ENCODE measurements at regions of chr2 and their contacts with region 1.

Region 1: GRCh38 chr2:28594289-28595108 is 98.6 kb downstream of the PLB1 start:
- DNase-seq: peak; percentile 73
- H3K4me3 Mint-ChIP-seq: peak overlapping the region; percentile 11
- H3K27ac Mint-ChIP-seq: peak overlapping the region; percentile 79
- H3K4me1 Mint-ChIP-seq: peaks cover 18% of the 10 kb centered on the region
- H3K27me3 Mint-ChIP-seq: no peaks in the 10 kb centered on the region

Region 2: DNA sequence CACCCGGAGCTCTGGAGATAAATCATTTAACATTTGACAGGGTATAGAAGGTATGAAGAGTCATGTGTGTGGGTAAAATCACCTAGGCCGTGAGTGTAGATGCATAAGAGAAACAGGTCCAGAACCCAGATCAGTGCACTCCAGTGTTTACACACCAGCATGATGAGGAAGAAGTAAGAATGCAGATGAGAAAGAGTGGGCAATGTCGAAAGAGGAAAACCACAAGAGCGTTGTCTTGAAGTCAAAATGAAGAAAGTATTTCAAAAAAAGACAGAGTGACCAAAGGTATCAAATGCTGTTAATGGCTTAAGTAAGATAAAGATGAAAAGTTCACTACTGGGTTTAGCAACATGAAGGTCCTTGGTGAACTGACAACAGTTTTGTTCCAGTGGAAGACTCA is 130.6 kb before region 1 on chr2:
- intact Hi-C with region 1: no loop called
- DNase-seq: no peak
- H3K4me3 Mint-ChIP-seq: no peak overlapping the region
- H3K27ac Mint-ChIP-seq: peak overlapping the region; percentile 38
- H3K4me1 Mint-ChIP-seq: peaks cover 42% of the 10 kb centered on the region
- H3K27me3 Mint-ChIP-seq: peaks cover 2% of the 10 kb centered on the region

Region 3: DNA sequence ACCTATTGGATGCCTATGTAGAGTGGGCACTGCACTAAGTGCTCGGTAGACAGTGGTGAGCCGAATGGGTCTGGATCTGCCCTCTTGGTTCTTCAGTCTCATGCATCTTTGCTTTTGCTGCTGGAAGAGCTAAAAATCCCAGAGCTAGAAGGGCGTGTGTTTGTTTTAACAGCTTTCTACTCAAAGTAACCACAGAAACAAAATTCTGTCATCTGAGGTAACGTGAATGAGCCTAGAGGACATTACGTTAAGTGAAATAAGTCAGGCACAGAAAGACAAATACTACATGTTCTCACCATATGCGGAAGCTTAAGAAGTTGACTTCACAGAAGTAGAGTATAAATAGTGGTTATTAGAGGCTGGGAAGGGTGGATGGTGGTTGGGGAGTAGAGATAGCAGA is 21.2 kb after region 1 on chr2:
- intact Hi-C with region 1: loop called (anchors 1 kb)
- DNase-seq: no peak
- H3K4me3 Mint-ChIP-seq: no peak overlapping the region
- H3K27ac Mint-ChIP-seq: no peak overlapping the region
- H3K4me1 Mint-ChIP-seq: peaks cover 48% of the 10 kb centered on the region
- H3K27me3 Mint-ChIP-seq: no peaks in the 10 kb centered on the region

Region 4: DNA sequence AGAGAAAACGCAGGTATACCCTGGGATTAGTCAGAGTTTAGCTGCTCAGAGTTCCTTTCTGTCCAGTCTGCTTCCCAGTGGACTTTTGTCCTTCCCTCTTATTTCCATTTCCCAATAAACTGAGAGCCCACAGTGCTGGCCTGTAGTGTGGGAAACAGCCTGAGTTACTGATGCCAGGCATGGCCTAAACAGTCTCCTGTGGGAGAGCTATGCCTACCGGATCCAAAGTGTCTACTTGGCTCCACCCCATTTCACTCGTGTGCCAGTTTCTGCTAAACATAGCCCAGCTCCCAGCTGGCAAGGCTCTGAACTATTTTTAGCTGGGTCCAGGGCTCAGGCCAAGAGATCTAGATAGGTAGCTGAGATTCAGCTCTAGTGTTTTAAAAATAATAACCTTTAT is 141.5 kb after region 1 on chr2:
- intact Hi-C with region 1: no loop called
- DNase-seq: no peak
- H3K4me3 Mint-ChIP-seq: no peak overlapping the region
- H3K27ac Mint-ChIP-seq: no peak overlapping the region
- H3K4me1 Mint-ChIP-seq: no peaks in the 10 kb centered on the region
- H3K27me3 Mint-ChIP-seq: no peaks in the 10 kb centered on the region